Right ventricle myocardium inferior (tissue), 1 donor: ENCODE measurements at regions of chr5 and their contacts with region 1.

Region 1: DNA sequence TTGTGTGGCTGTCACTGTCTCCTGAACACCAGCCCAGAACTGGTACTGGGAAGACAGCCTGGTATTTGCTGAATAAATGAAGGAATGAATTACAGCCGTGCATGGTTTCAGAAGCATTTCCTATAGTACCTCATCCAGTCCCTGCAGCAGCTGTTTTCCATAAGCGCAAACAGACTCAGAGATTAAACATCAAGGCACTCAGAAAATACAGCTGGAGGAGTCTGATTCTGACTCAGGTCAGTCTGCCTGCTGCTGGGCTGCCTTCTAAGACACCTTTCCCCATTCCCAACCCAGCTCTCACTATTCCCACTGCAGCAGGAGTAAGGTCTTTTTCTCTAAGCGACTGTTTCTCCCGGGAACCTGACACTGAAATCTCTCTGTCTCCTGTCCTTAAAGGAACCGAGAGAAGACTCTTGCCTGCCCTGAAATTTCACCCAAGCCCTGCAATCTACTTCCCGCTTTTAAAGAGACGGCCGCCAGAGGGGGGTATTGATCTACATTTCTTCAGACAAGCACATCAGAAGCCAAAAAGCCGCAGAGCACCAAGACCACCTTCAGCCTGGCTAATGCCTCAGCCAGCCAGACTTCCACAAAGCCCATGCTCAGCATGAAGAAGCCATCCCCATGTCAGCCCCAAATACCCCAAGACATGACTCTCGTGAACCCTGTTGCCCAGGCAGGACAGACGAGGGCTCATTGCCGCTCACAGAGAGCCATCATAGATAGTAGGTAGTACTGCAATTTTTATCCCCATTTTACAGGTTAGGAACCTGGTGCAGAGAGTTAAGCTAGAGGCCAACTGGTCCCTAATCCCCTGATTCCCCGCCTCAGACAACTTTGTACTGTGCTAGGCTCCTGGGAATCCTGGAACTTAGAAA is 5.4 kb upstream of the FOXI1 start:
- DNase-seq: no peak
- ATAC-seq: peak; percentile 65

Region 2: DNA sequence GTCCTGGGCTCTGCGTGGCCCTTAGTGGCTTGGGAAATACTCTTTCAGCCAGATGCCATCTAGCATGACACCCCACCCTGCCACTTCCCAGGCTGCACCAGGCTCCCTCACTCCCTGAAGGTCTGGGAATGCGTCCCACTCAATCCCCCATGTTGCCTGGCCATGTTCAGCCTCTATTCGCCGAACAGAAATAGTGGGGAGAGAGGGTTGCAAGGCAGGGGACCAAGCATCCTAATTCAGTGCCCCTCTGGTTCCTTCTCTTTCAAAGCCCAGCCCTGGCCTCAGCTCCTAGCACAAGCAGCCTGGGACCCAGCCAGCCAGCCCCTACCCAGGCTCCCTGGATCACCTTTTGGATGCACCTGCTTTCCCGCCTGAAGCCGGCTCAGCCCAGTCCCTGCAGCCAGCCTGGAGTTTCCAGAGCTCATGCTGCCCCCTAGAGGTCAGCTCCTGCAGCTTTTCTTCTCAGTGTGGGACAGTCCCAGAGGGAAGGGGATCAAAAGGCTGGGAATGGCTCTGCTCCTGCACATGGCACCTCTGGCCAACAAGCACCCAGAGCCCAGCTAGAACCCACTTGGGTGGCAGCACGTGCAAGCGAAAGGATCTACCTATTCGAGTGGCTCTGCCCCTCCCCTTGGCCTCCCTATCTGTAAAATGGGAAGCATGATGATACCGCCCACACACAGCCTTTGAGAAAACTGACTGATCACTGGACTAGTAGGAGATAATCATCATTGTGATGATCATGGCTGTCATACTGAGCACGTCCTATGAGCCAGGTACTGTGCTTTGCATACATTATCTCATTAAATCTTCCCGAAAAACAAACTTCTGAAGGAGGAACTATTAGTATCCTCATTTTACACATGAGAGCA is 83.7 kb after region 1 on chr5:
- intact Hi-C with region 1: loop called (anchors 1 kb)
- DNase-seq: no peak
- ATAC-seq: peak; percentile 82

Region 3: DNA sequence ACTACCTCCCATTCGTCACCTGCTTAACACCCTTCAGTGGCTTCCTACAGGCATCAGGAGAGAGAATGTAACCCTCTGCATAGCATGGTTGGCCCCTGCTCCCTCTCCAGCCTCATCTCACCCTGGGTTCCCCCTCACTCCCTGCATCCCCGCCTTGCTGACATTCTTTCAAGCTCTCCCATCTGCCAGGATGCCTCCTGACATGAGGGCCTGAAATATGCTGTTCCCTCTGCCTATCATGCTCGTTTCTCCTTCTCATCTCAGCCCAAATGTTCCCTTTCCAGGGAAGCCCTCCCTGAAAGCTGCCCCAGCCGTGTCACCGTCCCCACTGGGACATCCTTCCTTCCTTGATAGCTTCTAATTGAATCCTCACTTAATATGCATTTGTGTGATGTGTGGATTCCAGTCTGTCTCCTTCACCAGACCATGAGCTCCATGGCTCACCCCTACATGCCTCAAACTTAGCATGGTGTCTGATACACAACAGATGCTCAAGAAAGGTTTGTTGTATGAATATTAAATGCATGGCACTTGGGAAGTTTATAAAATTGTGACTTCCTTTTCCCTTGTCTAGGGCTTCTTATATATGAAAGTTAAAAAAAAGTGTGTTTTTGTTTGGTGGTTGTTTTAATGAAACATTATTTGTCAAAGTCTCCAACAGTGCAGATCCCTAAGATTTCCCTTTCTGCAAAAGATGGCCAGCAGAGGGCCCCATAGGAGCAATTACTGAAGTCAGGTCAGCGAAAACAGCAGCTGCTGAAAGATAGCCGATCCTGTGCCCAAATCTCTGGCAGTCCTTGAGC is 125.2 kb after region 1 on chr5:
- intact Hi-C with region 1: no loop called
- DNase-seq: peak; percentile 82
- ATAC-seq: peak; percentile 80